ENCODE measurements at regions of chr21 and their contacts with region 1.

Region 1: GRCh38 chr21:44949779-44950198 is 10.0 kb downstream of the SLX9 start:
- DNase-seq: peak; percentile 73 to 91 (median 82)
- ATAC-seq: peak; percentile 88
- H3K4me3 ChIP-seq: no peak overlapping the region
- H3K4me3 Mint-ChIP-seq: no peak overlapping the region
- H3K27ac ChIP-seq: no peak overlapping the region
- H3K27ac Mint-ChIP-seq: no peak overlapping the region
- H3K4me1 ChIP-seq: peaks cover 16% of the 10 kb centered on the region
- H3K4me1 Mint-ChIP-seq: peaks cover 5% of the 10 kb centered on the region
- H3K27me3 ChIP-seq: no peaks in the 10 kb centered on the region
- H3K27me3 Mint-ChIP-seq: no peaks in the 10 kb centered on the region
- CTCF ChIP-seq: peak; percentile 92

Region 2: DNA sequence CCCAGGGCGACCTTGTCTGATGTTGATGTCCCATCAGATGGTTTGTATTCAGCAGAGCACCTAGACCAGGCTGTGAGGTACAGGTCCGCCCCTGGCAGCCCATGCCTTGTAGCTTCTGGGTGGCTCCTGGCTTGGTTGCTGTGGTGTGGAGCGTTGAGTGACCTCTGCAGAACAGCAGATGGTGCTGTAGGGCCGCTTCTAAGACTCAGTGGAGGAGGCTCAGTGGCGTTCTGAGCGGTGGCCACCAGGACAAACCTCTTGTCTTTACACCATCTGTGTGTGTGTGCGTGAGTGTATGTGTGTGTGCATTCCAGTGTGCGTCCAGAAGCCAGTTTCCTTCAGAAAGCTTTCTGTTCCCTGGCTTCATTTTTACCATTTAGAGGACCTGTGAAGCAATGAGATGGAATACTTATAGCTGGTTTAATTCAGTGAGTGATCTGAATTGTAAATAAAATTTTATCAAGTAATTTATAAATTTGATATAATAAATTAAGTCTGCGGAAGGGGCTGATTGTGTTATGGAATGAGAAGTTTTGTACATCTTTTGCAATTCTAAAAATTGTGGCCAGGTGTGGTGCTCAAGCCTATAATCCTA is 190.7 kb after region 1 on chr21:
- CTCF ChIA-PET with region 1: interaction called, 31 read pairs
- POLR2A ChIA-PET with region 1: no interaction called
- intact Hi-C with region 1: loop called in 1 of 2 experiments (anchors 1 kb)
- DNase-seq: peak; percentile 30 to 83 (median 50)
- ATAC-seq: peak; percentile 93
- H3K4me3 ChIP-seq: no peak overlapping the region
- H3K4me3 Mint-ChIP-seq: no peak overlapping the region
- H3K27ac ChIP-seq: no peak overlapping the region
- H3K27ac Mint-ChIP-seq: no peak overlapping the region
- H3K4me1 ChIP-seq: peaks cover 12% of the 10 kb centered on the region
- H3K4me1 Mint-ChIP-seq: peaks cover 21% of the 10 kb centered on the region
- H3K27me3 ChIP-seq: no peaks in the 10 kb centered on the region
- H3K27me3 Mint-ChIP-seq: no peaks in the 10 kb centered on the region
- CTCF ChIP-seq: peak; percentile 48

Measured in CD4-positive, alpha-beta T cell (primary cell).